ENCODE measurements at regions of chr5 and their contacts with region 1.

Region 1: GRCh38 chr5:134917070-134917815 is 12.3 kb downstream of the PCBD2 start:
- DNase-seq: no peak
- H3K4me3 Mint-ChIP-seq: no peak overlapping the region
- H3K27ac Mint-ChIP-seq: no peak overlapping the region
- H3K4me1 Mint-ChIP-seq: peaks cover 31% of the 10 kb centered on the region
- H3K27me3 Mint-ChIP-seq: no peaks in the 10 kb centered on the region

Region 2: GRCh38 chr5:134609232-134609851 is 307.9 kb before region 1 on chr5:
- CTCF ChIA-PET with region 1: no interaction called
- POLR2A ChIA-PET with region 1: interaction called, 3 read pairs
- intact Hi-C with region 1: loop called (anchors 5 kb)
- DNase-seq: peak; percentile 19
- H3K4me3 Mint-ChIP-seq: peak overlapping the region; percentile 52
- H3K27ac Mint-ChIP-seq: peak overlapping the region; percentile 97
- H3K4me1 Mint-ChIP-seq: peaks cover 54% of the 10 kb centered on the region
- H3K27me3 Mint-ChIP-seq: no peaks in the 10 kb centered on the region

Region 3: DNA sequence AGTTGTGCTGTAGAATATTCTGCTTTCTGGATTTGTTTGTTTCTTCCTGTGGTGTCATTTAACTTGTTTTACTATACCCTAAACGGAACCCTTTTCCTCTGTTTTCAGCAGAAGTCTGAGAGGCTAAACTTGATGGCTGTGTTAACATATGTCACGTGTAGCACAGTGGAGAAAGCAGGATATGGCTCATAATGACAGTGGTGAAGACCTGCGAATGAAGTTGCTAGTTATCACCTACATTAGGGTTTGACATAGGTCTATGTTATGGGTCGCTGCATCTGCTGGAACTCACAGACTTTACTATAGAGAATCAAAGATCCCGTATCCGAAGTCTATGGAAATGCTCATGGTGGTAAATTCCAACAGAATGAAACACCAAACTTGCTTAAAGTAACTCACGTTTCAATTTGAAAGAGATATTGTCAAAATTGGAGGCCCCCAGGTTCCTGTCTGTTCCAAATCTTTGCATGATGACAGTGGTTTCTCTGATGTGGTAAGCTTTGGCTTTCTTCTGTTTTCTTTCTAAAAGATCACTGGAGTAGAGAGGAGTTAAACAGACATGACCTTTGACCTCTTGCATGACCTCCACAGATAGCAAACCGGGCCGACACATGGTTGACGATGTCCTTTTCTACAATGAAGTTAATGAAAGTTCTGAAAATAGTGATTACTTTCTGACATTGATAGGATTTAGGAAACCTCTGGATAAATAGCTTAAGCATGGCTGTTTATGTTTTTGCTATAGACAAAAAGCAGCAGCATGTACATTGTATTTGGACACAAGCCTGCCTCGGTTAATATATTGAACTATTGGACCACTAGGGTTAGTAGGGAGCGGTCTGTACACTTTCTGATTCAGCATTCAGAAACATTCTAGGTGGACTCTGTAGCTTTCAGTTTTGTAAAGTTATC is 47.4 kb after region 1 on chr5:
- CTCF ChIA-PET with region 1: interaction called, 6 read pairs
- POLR2A ChIA-PET with region 1: no interaction called
- intact Hi-C with region 1: loop called (anchors 1 kb)
- DNase-seq: peak; percentile 14
- H3K4me3 Mint-ChIP-seq: no peak overlapping the region
- H3K27ac Mint-ChIP-seq: peak overlapping the region; percentile 75
- H3K4me1 Mint-ChIP-seq: peaks cover 28% of the 10 kb centered on the region
- H3K27me3 Mint-ChIP-seq: no peaks in the 10 kb centered on the region

Region 4: DNA sequence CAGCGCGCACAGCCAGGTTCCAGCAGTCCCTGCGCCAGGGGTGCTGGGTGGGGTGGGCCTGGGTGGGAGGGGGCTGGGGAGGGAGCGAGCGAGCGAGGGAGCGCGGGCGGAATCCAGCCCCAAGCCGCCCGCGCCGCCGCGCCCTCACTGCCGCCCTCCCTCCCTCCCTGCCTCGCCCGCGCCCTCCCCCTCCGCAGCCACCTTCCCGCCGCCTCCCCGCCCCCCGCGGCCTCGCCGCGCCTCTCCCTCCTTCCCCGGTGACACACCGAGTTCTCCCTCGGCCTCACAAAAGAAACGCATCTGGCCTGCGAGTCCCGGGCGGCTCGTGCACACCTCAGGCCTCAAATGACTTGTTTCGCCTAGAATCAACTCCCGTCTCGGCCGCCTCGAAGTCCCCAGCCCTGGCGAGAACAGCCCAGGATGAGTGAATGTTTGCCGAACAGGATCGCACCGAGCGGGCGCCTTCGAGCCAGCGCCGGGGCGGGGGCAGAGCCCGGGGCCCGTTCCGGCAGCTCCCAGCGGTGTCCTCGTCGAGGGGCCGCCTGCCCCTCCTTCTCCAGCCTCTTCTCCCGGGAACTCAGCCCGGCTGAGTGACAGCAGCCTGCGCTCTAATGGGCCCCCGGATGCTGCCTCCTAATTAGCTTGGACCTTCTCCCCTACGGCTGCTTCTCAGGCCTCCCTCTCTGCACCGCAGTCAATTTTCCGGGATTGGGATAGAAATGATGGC is 117.2 kb after region 1 on chr5:
- CTCF ChIA-PET with region 1: no interaction called
- POLR2A ChIA-PET with region 1: no interaction called
- intact Hi-C with region 1: loop called (anchors 1 kb)
- DNase-seq: peak; percentile 61
- H3K4me3 Mint-ChIP-seq: peak overlapping the region; percentile 69
- H3K27ac Mint-ChIP-seq: no peak overlapping the region
- H3K4me1 Mint-ChIP-seq: peaks cover 34% of the 10 kb centered on the region
- H3K27me3 Mint-ChIP-seq: peaks cover 74% of the 10 kb centered on the region

Region 5: DNA sequence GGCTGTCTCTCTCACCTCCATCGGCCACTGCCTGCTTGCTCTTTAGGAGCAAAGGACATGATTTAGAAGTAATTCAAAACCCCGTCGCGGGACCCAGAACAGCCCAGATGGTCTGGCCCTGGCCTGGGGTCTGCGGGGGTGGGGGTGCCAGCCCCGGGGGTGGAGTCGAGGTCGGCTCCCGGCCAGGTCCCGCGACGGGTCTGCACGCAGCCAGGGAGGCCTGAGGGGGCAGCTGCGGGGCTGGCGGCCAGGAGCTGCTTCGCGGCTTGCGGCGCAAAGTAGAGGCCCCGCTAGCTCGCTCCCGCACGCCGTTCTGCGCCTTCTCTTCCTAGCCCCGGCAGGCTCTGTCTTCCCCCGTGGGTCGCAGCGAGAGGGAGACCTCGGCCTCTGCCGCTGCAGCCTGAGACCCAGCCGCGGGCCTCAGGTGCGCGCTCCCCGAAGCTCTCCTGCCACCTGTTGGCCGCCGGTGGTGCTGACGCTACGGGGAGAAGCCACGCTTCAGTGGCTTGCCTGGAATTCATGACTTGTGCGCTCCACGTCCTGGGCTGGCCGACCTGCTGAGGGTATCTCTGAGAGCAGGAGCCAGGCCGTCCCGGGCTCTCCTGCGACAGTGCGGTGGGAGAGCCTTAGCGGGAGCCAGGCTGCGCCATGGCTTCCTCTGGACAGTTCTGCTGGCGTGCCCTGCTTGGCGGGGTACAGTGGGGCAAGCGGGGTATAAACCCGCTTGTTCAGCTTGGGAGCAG is 274.0 kb after region 1 on chr5:
- CTCF ChIA-PET with region 1: no interaction called
- POLR2A ChIA-PET with region 1: no interaction called
- intact Hi-C with region 1: loop called (anchors 1 kb)
- DNase-seq: peak; percentile 83
- H3K4me3 Mint-ChIP-seq: peak overlapping the region; percentile 59
- H3K27ac Mint-ChIP-seq: no peak overlapping the region
- H3K4me1 Mint-ChIP-seq: peaks cover 7% of the 10 kb centered on the region
- H3K27me3 Mint-ChIP-seq: peaks cover 35% of the 10 kb centered on the region

Region 6: DNA sequence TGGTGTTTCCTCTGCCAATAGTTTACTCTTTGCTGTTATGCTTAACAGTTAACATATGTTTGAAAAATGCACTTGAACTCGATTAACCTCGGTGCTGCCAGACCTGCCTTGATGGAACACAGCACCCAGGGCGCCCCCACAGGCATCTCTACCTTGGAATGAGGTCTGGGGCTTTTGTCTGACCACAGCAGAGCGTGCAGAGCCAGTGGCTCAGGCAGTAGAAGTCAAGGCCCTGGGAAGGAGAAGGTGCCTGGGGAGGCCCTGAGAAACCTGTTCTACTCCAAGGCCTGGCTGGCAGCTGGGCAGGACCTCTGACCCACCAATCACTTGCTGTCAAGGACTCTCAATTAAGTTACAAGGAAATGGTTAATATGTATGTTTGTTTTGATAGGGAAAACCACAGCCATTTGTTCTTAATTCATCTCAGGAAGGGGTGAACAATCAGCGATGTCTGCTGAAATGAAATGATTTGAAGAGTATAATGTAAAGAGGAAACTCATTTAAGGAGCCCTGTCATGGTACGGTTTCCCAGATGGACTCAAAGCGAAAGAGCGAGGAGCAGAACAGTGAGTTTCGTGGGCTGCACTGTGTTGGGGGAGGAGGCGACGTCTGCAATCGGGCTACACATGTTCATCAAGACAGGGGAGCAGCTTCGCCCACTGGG is 459.9 kb after region 1 on chr5:
- CTCF ChIA-PET with region 1: no interaction called
- POLR2A ChIA-PET with region 1: no interaction called
- intact Hi-C with region 1: loop called (anchors 1 kb)
- DNase-seq: peak; percentile 74
- H3K4me3 Mint-ChIP-seq: no peak overlapping the region
- H3K27ac Mint-ChIP-seq: peak overlapping the region; percentile 71
- H3K4me1 Mint-ChIP-seq: peaks cover 68% of the 10 kb centered on the region
- H3K27me3 Mint-ChIP-seq: no peaks in the 10 kb centered on the region